Panc1 (cell line): ENCODE measurements at regions of chr11 and their contacts with region 1.

Region 1: GRCh38 chr11:61460474-61460881 is 30.6 kb downstream of the SDHAF2 start:
- DNase-seq: no peak
- ATAC-seq: no peak
- H3K4me3 ChIP-seq: no peak overlapping the region
- H3K27ac ChIP-seq: no peak overlapping the region
- H3K4me1 ChIP-seq: no peaks in the 10 kb centered on the region
- H3K27me3 ChIP-seq: no peaks in the 10 kb centered on the region
- CTCF ChIP-seq: no peak

Region 2: GRCh38 chr11:61712846-61713245 is 252.4 kb after region 1 on chr11:
- CTCF ChIA-PET with region 1: interaction called, 14 read pairs
- POLR2A ChIA-PET with region 1: no interaction called
- in situ Hi-C with region 1: no loop called
- intact Hi-C with region 1: no loop called
- DNase-seq: no peak
- ATAC-seq: no peak
- H3K4me3 ChIP-seq: no peak overlapping the region
- H3K27ac ChIP-seq: no peak overlapping the region
- H3K4me1 ChIP-seq: 0 out of 2 replicates have a peak, but pooled peaks cover 3% of the 10 kb centered on the region
- H3K27me3 ChIP-seq: no peaks in the 10 kb centered on the region
- CTCF ChIP-seq: no peak